ENCODE measurements at regions of chr1 and their contacts with region 1.

Region 1: DNA sequence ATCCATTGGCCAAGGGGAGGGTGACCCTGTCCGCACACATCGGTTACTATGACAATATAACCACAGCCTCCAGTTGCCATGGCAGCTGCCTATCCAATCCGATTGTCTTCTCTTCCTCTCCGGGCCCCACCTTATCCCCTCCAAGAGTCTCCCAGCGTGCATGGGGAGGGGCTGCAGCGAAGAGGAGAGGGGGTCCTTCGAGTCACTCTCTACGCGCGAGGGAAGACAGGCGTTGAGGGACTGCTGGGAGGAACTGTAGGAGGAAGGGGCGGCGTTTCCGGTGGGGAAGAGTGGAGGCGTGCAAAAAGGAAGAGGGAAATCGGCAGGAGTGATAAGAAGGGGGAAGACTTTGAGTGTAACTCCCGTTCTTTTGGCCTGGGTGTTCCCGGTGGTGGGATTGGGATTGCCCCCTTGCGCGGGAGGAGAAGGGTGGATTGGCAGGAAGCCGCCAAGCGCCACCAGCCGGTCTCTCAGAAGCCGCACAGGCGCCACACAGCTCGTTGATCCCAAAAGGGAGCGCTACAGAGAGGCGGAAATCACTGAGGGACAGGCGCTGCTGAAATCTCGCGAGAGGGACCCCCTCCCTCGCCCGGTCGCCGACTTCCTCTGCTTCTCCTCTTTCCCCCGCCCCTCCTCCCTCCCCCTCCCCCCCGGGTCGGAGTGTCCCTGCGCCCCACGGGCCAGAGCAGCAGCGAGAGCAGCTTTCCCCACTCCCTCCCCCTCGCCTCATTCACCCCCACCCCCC is 384 bp upstream of the SMG7 start:
- DNase-seq: peak; percentile 98

Region 2: GRCh38 chr1:183432548-183432875 is 39.4 kb before region 1 on chr1:
- intact Hi-C with region 1: no loop called
- DNase-seq: no peak

Region 3: GRCh38 chr1:183520379-183520778 is 48.5 kb after region 1 on chr1:
- intact Hi-C with region 1: loop called (anchors 5 kb)
- DNase-seq: no peak

Region 4: GRCh38 chr1:183543619-183544204 is 71.8 kb after region 1 on chr1:
- intact Hi-C with region 1: loop called (anchors 1 kb)
- DNase-seq: no peak

Region 5: GRCh38 chr1:183635606-183636333 is 163.9 kb after region 1 on chr1 and contains the start of gene ARPC5:
- intact Hi-C with region 1: loop called (anchors 2 kb)
- DNase-seq: peak; percentile 99
- total RNA-seq, gene ARPC5: 49.8 TPM